ENCODE measurements at regions of chr16 and their contacts with region 1.

Region 1: DNA sequence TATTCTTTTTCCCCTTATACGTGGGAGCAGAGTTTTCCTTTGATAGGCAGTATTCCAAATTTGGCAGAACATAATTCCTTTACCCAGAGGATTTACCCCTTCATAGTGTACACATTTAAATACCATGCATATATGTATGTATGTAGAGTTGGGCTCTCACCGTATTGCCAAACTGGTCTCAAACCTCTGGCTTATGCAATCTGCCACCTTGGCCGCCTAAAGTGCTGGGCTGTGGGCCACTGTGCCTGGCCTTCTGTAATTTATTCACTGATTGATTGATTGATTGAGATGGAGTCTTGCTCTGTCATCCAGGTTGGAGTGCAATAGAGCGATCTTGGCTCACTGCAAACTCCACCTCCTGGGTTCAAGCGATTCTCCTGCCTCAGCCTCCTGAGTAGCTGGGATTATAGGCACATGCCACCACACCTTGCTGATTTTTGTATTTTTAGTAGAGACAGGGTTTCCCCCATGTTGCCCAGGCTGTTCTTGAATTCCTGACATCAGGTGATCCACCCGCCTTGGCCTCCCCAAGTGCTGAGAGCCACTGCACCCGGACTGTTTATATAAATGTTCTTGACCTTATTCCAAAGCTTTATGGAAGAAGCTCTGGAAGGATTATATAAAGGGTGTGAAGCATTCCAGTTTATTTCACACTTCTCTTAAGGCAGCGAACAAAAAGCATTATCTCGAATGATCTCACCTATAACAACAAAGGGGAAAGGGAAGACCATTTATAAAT is 14.9 kb downstream of the GLG1 start:
- DNase-seq: no peak
- ATAC-seq: no peak
- H3K4me3 ChIP-seq: no peak overlapping the region
- H3K27ac ChIP-seq: no peak overlapping the region
- H3K4me1 ChIP-seq: peaks cover 75 to 77% of the 10 kb centered on the region in 2 experiments
- H3K27me3 ChIP-seq: no peaks in the 10 kb centered on the region
- CTCF ChIP-seq: no peak
- POLR2A ChIP-seq: no peak
- RAD21 ChIP-seq: no peak

Region 2: DNA sequence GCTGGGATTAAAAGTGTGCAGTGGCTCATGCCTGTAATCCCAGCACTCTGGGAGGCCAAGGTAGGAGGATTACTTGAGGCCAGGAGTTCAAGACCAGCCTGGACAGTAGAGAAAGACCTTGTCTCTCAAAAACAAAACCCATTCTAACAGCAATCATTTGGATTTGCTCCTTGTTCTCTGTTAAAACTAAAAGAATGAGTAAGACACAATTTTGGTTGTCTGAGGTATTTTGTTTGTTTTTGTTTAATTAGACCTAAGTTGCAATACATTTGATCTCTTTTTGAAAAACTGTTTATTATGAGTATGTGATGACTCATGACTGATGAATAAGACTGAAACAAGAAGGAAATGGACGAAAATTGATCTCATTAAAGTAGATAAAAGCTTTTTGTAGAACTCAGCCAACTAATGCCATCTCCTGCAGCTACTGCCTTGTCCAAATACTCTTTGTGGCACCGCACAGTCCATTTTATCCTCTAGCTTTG is 14.1 kb before region 1 on chr16:
- CTCF ChIA-PET with region 1: no interaction called
- POLR2A ChIA-PET with region 1: interaction called, 6 read pairs
- RAD21 ChIA-PET with region 1: interaction called, 3 read pairs
- intact Hi-C with region 1: loop called (anchors 1 kb)
- DNase-seq: peak; percentile 94
- ATAC-seq: peak; percentile 86
- H3K4me3 ChIP-seq: peak overlapping the region in 1 of 2 experiments; percentile 35; a peak in 1 of 4 replicates
- H3K27ac ChIP-seq: peak overlapping the region; percentile 84
- H3K4me1 ChIP-seq: peaks cover 85 to 94% of the 10 kb centered on the region in 2 experiments
- H3K27me3 ChIP-seq: no peaks in the 10 kb centered on the region
- CTCF ChIP-seq: no peak
- POLR2A ChIP-seq: no peak
- RAD21 ChIP-seq: peak; percentile 36; the same call in 1 of the 2 replicates